ENCODE measurements at regions of chr19 and their contacts with region 1.

Region 1: GRCh38 chr19:29528350-29528945 is 2.7 kb downstream of the VSTM2B start:
- DNase-seq: peak; percentile 81
- H3K4me3 Mint-ChIP-seq: peak overlapping the region; percentile 49
- H3K27ac Mint-ChIP-seq: no peak overlapping the region
- H3K4me1 Mint-ChIP-seq: peaks cover 29% of the 10 kb centered on the region
- H3K27me3 Mint-ChIP-seq: peaks cover 67% of the 10 kb centered on the region

Region 2: GRCh38 chr19:28737021-28737895 is 791.2 kb before region 1 on chr19:
- CTCF ChIA-PET with region 1: no interaction called
- intact Hi-C with region 1: loop called (anchors 1 kb)
- DNase-seq: peak; percentile 31
- H3K4me3 Mint-ChIP-seq: no peak overlapping the region
- H3K27ac Mint-ChIP-seq: no peak overlapping the region
- H3K4me1 Mint-ChIP-seq: peaks cover 4% of the 10 kb centered on the region
- H3K27me3 Mint-ChIP-seq: peaks cover 7% of the 10 kb centered on the region

Region 3: DNA sequence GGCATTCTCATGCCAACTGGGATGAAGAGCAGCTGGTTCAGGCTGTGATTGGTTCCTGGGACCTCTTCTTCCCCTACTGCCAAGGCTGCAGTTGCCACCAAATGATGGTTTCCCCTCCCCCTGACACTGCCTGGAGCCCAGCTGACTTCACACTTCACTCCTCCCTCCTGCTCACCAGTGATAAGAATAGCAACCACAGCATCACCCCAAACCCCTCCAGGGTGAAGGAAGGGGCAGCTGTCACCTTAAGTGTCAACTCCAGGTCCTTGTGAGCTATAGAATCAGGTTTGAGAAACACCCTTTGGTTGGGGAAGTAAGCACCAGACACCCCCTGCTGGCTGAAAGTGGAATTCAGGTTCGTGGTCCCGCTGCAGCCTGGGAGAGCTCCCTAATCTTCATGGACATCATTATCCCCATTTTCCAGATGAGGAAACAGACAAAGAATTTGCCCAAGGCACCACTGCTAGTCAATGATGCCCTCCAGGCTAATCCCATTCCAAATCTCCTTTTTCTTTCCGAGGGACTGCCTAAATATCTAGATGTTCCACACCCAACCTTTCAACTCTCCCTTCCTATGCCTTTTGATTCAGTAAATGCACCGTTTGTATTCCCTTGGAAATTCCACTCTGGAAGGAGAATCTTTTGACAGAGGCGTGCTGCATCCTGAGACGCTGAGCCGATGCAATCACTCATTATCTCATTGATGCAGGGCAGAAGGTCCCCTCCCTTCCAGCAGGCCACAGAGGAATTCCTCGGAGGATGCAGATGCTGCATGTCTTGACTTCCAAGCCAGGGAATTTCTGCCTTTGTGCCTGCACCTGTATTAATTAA is 264.9 kb before region 1 on chr19:
- CTCF ChIA-PET with region 1: interaction called, 5 read pairs
- intact Hi-C with region 1: loop called (anchors 5 kb)
- DNase-seq: peak; percentile 72
- H3K4me3 Mint-ChIP-seq: no peak overlapping the region
- H3K27ac Mint-ChIP-seq: no peak overlapping the region
- H3K4me1 Mint-ChIP-seq: no peaks in the 10 kb centered on the region
- H3K27me3 Mint-ChIP-seq: peaks cover 19% of the 10 kb centered on the region

Region 4: DNA sequence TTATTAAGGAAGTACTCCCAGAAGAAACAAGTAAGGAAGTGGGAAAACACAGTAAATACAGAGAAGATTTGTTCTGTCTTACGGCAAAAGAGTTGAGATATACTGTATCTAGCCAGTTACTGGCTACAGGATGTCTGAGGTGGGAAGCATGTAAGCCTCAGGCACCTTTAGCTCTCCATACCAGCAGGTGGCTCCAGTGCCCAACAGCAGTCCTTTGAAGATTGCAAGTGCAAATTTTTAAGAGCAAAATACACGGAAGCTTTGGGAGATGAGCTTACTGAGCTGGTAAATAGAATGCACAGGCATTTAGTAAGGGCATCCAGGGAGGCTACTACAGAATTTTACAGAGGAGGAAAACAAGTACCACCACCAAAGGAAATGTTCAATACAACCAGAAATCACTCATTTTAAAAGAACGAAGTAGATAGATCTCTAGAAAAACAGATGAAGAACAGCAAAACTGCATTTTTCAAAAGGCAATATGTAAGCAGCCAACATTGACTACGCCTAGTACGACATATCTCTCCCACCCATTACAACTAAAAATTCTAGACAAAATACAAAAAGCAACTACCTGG is 60.5 kb before region 1 on chr19:
- CTCF ChIA-PET with region 1: no interaction called
- intact Hi-C with region 1: loop called (anchors 10 kb)
- DNase-seq: peak; percentile 51
- H3K4me3 Mint-ChIP-seq: no peak overlapping the region
- H3K27ac Mint-ChIP-seq: no peak overlapping the region
- H3K4me1 Mint-ChIP-seq: no peaks in the 10 kb centered on the region
- H3K27me3 Mint-ChIP-seq: peaks cover 21% of the 10 kb centered on the region

Region 5: DNA sequence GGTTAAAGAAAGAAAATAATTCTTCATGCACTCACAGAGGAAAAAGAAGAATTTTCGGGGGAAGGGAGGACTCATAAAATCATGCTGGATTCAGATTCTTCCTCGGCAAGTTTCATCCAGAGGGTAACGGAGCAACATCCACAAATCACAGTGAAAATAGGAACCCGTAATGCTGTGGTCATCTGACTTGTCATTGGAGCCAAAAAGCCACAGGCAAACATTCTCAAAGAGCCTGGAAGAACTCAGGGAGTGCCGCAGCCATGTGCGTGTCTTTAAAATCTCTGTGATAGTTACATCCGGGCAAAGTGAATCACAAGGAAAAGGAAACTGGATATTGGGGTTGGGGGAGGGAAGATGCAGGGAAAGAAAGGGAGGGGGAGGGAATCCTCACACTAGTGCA is 35.7 kb before region 1 on chr19:
- CTCF ChIA-PET with region 1: no interaction called
- intact Hi-C with region 1: no loop called
- DNase-seq: no peak
- H3K4me3 Mint-ChIP-seq: no peak overlapping the region
- H3K27ac Mint-ChIP-seq: no peak overlapping the region
- H3K4me1 Mint-ChIP-seq: no peaks in the 10 kb centered on the region
- H3K27me3 Mint-ChIP-seq: peaks cover 25% of the 10 kb centered on the region

Region 6: DNA sequence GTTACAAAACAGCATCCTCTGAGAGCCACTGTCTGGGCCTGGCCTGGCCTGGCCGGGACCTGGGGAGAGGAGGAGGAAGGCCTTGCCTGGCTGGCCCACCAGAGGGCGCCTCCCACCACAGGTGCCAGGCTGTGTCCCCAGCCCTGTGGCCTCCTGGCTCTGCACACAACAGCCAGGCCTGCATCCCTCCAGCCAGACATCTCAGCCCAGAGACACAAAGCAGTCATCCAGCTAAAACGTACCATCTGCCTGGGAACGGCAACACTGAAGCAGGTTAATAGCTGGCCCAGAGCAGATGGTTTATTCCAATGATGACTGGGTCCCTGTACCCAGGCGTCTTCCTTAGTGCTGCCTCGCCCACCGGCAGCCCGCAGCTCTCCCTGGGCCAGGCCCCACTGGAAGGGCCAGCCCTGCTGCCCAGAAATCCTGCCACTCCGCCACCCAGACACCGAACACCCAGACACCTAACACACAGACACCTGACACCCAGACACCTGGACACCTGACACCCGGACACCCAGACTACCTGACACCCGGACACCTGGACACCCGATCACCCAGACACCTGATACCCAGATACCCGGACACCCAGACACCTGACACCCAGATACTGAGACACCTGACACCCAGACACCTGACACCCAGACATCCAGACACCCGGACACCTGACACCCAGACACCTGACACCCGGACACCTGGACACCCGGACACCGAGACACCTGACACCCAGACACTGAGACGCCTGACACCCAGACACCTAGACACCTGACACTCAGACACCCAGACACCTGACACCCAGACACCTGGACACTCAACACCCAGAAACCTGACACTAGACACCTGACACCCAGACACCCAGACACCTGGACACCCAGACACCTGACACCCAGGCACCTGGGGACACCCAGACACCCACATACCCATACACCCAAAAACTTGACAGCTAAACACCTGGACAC is 166.5 kb after region 1 on chr19:
- CTCF ChIA-PET with region 1: no interaction called
- intact Hi-C with region 1: loop called (anchors 2 kb)
- DNase-seq: peak; percentile 88
- H3K4me3 Mint-ChIP-seq: no peak overlapping the region
- H3K27ac Mint-ChIP-seq: no peak overlapping the region
- H3K4me1 Mint-ChIP-seq: peaks cover 11% of the 10 kb centered on the region
- H3K27me3 Mint-ChIP-seq: no peaks in the 10 kb centered on the region

Region 7: DNA sequence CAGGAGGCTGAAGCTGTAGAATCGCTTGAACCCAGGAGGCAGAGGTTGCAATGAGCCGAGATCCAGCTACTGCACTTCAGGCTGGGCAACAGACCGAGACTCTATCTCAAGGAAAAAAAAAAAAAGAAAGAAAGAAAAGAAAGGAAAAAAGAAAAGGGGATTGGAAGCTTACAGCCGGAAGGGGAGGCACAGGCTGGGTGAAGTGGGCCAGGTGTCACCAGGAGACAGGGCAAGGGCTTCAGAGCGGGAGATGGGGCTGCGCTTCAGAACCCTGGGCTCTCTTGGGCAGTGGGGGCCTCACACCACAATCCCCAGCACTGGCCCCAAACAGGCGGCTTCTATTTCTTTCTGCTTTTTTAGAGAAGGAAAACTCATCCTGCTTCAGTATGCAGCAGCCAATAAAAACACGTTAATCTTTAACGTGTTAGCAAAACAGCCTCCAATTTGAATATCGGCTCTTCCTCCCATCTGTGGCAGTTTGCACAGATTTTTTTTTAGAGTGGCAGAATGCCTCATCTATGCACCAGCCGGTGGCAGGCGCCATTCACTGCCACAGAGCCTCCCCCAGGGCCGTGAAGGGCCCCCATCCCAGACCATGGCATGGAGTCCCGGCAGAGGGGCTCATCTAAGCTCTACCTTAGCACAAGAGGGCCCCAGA is 233.3 kb after region 1 on chr19:
- CTCF ChIA-PET with region 1: no interaction called
- intact Hi-C with region 1: no loop called
- DNase-seq: no peak
- H3K4me3 Mint-ChIP-seq: no peak overlapping the region
- H3K27ac Mint-ChIP-seq: no peak overlapping the region
- H3K4me1 Mint-ChIP-seq: peaks cover 3% of the 10 kb centered on the region
- H3K27me3 Mint-ChIP-seq: no peaks in the 10 kb centered on the region

Region 8: DNA sequence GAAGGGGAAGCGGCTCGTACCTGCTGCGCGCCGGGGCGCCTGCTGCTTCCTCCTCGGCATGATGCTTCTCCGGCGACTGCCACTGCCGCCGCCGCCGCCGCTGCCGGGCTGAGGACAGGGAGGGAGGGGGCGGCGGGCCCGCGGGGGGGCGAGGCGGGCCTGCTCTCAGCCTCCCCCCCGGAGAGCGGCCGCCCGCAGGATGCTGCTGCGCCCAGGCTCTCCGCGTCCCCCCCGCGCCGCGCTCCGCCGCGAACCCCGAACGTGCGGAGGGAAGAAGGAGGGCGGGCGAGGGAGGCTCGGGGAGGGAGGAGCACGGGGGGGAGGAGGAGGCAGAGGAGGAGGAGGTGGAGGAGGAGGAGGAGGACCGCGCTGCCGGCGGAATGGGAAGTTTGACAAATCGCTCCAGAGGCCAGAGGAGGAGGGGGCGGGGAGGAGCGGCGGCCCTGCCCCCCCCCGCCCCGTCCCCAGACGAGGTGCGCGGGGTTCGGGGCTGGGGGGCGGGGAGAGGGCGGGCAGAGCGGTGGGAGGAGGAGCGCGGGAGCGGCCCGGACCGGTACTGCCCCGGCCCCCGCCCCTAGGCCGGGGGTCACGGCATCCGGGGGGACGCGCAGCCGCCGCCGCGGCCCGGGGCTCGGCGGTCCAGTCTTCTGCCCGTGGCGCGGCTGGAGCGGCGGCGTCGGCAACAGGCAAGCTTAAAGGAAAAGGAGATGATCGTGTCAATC is 1820.9 kb after region 1 on chr19 and contains the start of gene TSHZ3:
- CTCF ChIA-PET with region 1: no interaction called
- intact Hi-C with region 1: loop called (anchors 5 kb)
- DNase-seq: peak; percentile 67
- H3K4me3 Mint-ChIP-seq: peak within 1 kb of the TSS; percentile 76
- H3K27ac Mint-ChIP-seq: no peak within 1 kb of the TSS
- H3K4me1 Mint-ChIP-seq: peaks cover 28% of the 10 kb centered on the region
- H3K27me3 Mint-ChIP-seq: peaks cover 47% of the 10 kb centered on the region
- total RNA-seq, gene TSHZ3: 1.6 to 2.0 TPM